ENCODE measurements at regions of chr5 and their contacts with region 1.

Region 1: GRCh38 chr5:142151436-142152383 is 43.1 kb downstream of the NDFIP1 start:
- DNase-seq: peak in 3 of 5 donors; percentile 41 to 63 (median 52)
- ATAC-seq: peak in 3 of 4 donors; percentile 65 to 70 (median 66)
- H3K4me3 ChIP-seq: no peak overlapping the region
- H3K27ac ChIP-seq: peak overlapping the region in 1 of 12 donors; percentile 14
- H3K4me1 ChIP-seq: peaks cover 0 to 10% (median 3%) of the 10 kb centered on the region in 12 donors
- H3K27me3 ChIP-seq: no peaks in the 10 kb centered on the region
- CTCF ChIP-seq: peak; percentile 82 to 95 (median 88)
- POLR2A ChIP-seq: no peak

Region 2: GRCh38 chr5:142316051-142316450 is 164.3 kb after region 1 on chr5:
- intact Hi-C with region 1: loop called in 8 of 10 experiments (anchors 5 to 10 kb)
- DNase-seq: no peak
- ATAC-seq: peak in 3 of 4 donors; percentile 16 to 38 (median 32)
- H3K4me3 ChIP-seq: peak overlapping the region in 6 of 12 donors; percentile 2 to 29 (median 20)
- H3K27ac ChIP-seq: peak overlapping the region in 11 of 12 donors; percentile 27 to 97 (median 83)
- H3K4me1 ChIP-seq: peaks cover 20 to 98% (median 84%) of the 10 kb centered on the region in 12 donors
- H3K27me3 ChIP-seq: peaks cover 0 to 4% (median 0%) of the 10 kb centered on the region in 9 donors
- CTCF ChIP-seq: no peak
- POLR2A ChIP-seq: no peak

Region 3: DNA sequence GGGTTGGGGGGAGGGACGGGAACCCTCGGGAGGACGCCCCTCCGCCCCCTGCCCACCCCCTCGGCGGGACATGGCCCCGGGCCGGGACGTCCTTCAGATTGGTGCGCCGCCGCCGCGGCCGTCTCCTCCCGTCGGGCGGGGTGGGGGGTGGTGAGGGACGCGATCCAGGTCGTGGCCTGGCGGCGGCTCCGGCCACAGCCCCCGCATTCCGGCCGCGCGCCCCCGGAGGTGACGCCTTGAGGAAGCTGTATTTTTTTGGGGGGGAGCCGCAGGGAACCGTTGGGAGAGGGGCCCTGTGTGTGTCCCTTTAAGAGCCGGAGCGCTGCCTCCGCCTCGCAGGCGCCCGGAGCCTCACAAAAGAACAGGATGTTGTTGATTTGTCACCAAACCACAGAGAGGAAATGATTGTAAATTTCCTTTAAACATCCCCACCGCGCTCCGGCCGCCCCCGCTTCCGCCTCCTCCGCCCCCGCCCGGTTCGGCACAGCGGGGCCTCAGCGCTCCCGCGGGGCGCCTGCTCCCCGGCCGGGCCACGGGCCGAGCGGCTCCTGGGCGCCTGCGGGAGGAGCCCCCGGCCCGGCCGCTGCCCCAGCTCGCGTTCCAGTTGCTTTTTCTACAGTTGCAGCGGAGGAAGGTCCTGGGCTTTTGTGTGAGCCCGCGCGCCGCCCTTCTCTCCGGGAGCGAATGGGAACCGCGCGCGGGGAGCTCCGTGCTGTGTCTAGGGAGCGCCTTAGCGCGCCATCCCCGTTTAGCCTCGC is 205.2 kb after region 1 on chr5:
- intact Hi-C with region 1: loop called in 1 of 10 experiments (anchors 10 kb)
- DNase-seq: peak; percentile 89 to 93 (median 91)
- ATAC-seq: peak; percentile 74 to 93 (median 92)
- H3K4me3 ChIP-seq: peak overlapping the region; percentile 52 to 73 (median 64)
- H3K27ac ChIP-seq: peak overlapping the region; percentile 85 to 97 (median 94)
- H3K4me1 ChIP-seq: peaks cover 0 to 22% (median 12%) of the 10 kb centered on the region in 12 donors
- H3K27me3 ChIP-seq: peaks cover 0 to 33% (median 0%) of the 10 kb centered on the region in 9 donors
- CTCF ChIP-seq: peak in 1 of 12 donors; percentile 16
- POLR2A ChIP-seq: peak; percentile 7 to 62

Region 4: GRCh38 chr5:142432369-142432863 is 280.7 kb after region 1 on chr5:
- intact Hi-C with region 1: loop called in 1 of 10 experiments (anchors 10 kb)
- DNase-seq: peak in 2 of 5 donors; percentile 26 to 61
- ATAC-seq: peak in 2 of 4 donors; percentile 37 to 47
- H3K4me3 ChIP-seq: peak overlapping the region in 1 of 12 donors; percentile 10
- H3K27ac ChIP-seq: peak overlapping the region in 1 of 12 donors; percentile 71
- H3K4me1 ChIP-seq: peaks cover 0 to 53% (median 32%) of the 10 kb centered on the region in 12 donors
- H3K27me3 ChIP-seq: peaks cover 0 to 5% (median 0%) of the 10 kb centered on the region in 9 donors
- CTCF ChIP-seq: no peak
- POLR2A ChIP-seq: no peak

Region 5: GRCh38 chr5:142446131-142446959 is 294.6 kb after region 1 on chr5:
- intact Hi-C with region 1: loop called in 2 of 10 experiments (anchors 10 kb)
- DNase-seq: no peak
- ATAC-seq: peak; percentile 22 to 62 (median 46)
- H3K4me3 ChIP-seq: no peak overlapping the region
- H3K27ac ChIP-seq: peak overlapping the region in 10 of 12 donors; percentile 0 to 73 (median 55)
- H3K4me1 ChIP-seq: peaks cover 0 to 28% (median 12%) of the 10 kb centered on the region in 12 donors
- H3K27me3 ChIP-seq: no peaks in the 10 kb centered on the region
- CTCF ChIP-seq: no peak
- POLR2A ChIP-seq: no peak

Measured in heart left ventricle (tissue), 16 donors.